Astrocyte of the cerebellum (primary cell): ENCODE measurements at regions of chr15 and their contacts with region 1.

Region 1: GRCh38 chr15:29967956-29968889 is 114.5 kb upstream of the GOLGA8J start:
- DNase-seq: no peak
- H3K4me3 ChIP-seq: peak overlapping the region; percentile 44
- CTCF ChIP-seq: no peak

Region 2: DNA sequence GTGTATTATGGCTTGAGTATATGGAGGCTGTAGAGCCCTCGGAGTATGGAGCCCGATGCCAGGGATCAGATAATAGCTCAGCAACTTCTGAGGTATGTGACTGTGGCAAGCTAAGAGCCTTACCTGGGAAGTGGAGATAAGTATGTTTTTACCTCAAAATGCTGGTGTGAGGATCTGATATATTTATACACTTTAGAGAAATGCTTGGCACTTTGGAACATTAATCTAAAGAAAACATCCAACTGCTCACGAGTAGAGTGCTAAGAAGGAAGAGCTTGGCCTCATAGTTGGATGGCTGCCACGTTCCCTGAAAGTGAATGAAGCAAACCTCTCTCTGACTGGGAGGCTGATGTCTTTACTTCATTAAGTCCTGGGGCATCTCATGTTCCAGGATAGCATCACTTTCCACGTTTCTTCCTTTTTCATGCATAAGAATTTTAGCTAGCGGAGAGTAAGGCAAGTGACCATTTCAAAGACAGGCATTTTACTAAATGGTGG is 55.6 kb after region 1 on chr15:
- in situ Hi-C with region 1: loop called (anchors 5 kb)
- DNase-seq: peak; percentile 53
- H3K4me3 ChIP-seq: no peak overlapping the region
- CTCF ChIP-seq: no peak